ENCODE measurements at regions of chr14 and their contacts with region 1.

Region 1: DNA sequence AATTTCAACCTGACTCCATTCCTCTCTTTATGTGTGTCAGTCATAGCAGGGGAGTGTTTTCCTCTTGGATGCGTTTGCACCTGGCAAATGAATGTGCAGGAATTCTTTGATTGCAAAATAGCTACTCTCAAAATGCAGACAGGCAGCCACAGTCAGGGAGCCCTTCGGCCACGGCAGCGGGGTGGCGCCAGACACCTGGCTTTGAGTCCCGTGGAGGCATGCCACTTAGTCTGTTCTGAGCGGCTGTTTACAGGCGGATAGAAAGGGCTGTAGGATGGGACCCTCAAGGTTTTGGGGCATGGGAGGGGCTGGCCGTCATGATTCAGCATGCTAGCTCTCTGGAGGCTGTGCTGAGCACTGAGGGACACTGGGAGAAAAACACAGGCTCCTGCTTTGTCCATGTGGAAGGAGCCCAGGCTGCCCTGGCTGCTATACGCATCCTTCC is 117.1 kb downstream of the SLC25A47 start:
- DNase-seq: peak; percentile 63
- H3K4me3 Mint-ChIP-seq: no peak overlapping the region
- H3K27ac Mint-ChIP-seq: no peak overlapping the region
- H3K4me1 Mint-ChIP-seq: peaks cover 14% of the 10 kb centered on the region
- H3K27me3 Mint-ChIP-seq: no peaks in the 10 kb centered on the region

Region 2: DNA sequence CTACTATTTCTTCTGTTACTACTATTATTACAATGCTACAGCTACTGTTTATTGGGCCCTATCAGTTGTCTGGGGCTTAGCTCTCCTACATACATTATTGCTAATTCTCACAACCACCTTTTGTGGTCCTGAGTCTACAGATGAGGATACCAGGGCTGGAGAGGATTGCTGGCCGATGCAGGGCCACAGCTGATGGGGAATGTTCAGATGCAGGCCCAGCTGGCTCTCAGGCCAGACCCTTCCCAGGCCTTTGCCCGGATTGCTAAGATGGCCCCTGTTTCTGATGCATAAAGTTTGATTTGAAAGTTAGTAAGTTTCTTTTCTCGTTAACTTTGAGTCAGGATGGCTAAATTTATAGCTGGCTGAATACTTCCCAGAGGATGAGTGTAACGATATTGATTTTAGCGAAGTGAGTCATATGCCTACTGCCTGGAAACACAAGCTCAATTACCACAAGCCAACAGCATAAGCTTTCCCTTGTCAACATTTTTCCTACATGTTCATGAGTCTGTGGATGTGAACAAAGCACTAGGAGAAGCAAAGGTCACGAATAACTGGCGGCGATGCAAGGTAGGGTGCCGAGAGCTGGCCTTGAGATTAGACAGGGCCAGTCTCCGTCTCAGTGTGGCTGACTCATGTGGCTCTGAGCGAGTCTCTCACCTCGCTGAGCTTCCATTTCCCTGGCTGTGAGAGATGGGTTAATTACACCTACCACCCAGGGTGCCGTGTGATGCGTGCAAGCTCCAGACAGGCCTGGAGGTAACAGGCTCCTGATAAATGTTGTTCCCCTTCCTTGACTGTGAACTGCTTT is 36.0 kb after region 1 on chr14:
- CTCF ChIA-PET with region 1: no interaction called
- intact Hi-C with region 1: no loop called
- DNase-seq: no peak
- H3K4me3 Mint-ChIP-seq: no peak overlapping the region
- H3K27ac Mint-ChIP-seq: no peak overlapping the region
- H3K4me1 Mint-ChIP-seq: no peaks in the 10 kb centered on the region
- H3K27me3 Mint-ChIP-seq: no peaks in the 10 kb centered on the region

Region 3: GRCh38 chr14:100654814-100655740 is 214.9 kb after region 1 on chr14:
- CTCF ChIA-PET with region 1: interaction called, 7 read pairs
- intact Hi-C with region 1: loop called (anchors 1 kb)
- DNase-seq: peak; percentile 47
- H3K4me3 Mint-ChIP-seq: no peak overlapping the region
- H3K27ac Mint-ChIP-seq: no peak overlapping the region
- H3K4me1 Mint-ChIP-seq: peaks cover 6% of the 10 kb centered on the region
- H3K27me3 Mint-ChIP-seq: peaks cover 13% of the 10 kb centered on the region

Measured in activated naive CD4-positive, alpha-beta T cell treated with anti-CD3 and anti-CD28 coated beads for 36 hours (primary cell).